Motor neuron (in vitro differentiated cells): ENCODE measurements at regions of chr22 and their contacts with region 1.

Region 1: DNA sequence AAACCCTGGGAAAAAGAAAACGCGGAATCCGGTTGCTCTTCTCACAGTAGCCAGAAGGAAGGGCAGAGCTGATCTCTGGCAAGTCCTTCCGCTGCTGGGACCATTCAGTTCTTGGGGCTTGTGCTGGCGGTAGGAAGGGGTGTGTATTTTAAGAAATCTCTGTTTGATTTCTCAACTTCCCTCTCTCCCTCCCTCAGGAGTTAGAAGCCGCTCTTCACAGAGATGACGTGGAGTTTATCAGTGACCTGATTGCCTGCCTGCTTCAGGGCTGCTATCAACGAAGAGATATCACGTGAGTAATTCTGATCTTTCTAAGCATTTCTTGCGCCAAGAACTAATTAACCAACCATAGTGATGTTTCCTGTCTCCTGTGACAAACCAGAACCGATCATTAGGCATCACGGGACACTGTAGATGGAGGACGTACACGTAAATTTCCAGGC is 85.9 kb upstream of the SLC25A18 start:
- ATAC-seq: peak in 5 of 8 experiments; percentile 26 to 55 (median 34)
- H3K4me3 ChIP-seq: peak overlapping the region in 1 of 5 donors; percentile 3
- H3K27ac ChIP-seq: peak overlapping the region in 1 of 2 donors; percentile 42
- H3K4me1 ChIP-seq: peaks cover 38 to 42% of the 10 kb centered on the region in 2 donors

Region 2: GRCh38 chr22:17084554-17085276 is 392.7 kb before region 1 on chr22 and contains the start of gene IL17RA:
- in situ Hi-C with region 1: loop called in 1 of 9 experiments (anchors 25 kb)
- ATAC-seq: peak; percentile 91 to 98 (median 96)
- H3K4me3 ChIP-seq: peak within 1 kb of the TSS; percentile 27 to 48 (median 40)
- H3K27ac ChIP-seq: no peak within 1 kb of the TSS
- H3K4me1 ChIP-seq: no peaks in the 10 kb centered on the region
- total RNA-seq, gene IL17RA: 0.27 to 7.2 (median 2.2) TPM

Region 3: DNA sequence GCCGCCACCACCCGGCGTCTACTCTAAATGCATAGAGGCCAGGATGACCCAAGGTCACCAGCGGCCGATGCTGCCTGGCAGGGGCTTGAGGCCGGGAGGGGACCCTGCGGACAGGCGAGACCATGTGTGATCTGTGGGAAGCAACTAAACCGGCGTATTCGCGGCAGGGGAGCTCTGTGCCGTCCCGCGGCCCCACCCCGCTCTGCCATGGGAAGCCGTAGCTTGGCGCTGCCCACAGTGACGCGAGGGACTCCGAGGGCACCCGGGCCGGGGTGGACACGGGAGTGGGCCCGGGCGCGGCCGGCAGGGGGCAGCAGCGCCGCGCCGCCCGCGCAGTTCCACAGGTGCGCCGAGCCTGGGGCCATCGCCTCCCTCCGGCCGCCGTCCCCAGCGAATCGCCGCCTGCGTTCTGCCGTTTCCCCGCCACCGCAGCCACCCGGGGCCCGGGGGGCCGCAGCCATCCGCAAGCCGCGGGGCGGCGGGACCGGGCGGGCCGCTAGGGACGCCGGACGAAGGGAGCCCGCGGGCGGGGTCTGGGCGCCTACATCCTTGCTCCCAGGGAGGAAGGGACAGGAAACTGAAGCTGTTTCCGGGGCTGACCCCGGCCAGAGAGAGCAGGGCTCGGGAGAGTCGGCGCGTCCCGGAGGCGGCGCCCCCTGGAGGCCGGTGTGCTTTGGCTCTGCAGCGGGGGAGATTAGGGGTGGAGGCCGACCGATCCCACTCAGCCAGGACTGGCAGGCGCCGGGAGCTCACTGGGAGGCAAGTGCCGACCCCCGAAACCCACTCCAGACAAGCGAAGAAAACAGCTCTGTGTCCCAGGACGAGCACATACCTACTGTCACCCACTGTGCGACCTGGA is 305.9 kb before region 1 on chr22:
- in situ Hi-C with region 1: loop called in 5 of 9 experiments (anchors 25 kb)
- ATAC-seq: peak; percentile 95 to 98 (median 96)
- H3K4me3 ChIP-seq: peak overlapping the region; percentile 44 to 90 (median 70)
- H3K27ac ChIP-seq: peak overlapping the region; percentile 77 to 84
- H3K4me1 ChIP-seq: peaks cover 9 to 10% of the 10 kb centered on the region in 2 donors

Region 4: DNA sequence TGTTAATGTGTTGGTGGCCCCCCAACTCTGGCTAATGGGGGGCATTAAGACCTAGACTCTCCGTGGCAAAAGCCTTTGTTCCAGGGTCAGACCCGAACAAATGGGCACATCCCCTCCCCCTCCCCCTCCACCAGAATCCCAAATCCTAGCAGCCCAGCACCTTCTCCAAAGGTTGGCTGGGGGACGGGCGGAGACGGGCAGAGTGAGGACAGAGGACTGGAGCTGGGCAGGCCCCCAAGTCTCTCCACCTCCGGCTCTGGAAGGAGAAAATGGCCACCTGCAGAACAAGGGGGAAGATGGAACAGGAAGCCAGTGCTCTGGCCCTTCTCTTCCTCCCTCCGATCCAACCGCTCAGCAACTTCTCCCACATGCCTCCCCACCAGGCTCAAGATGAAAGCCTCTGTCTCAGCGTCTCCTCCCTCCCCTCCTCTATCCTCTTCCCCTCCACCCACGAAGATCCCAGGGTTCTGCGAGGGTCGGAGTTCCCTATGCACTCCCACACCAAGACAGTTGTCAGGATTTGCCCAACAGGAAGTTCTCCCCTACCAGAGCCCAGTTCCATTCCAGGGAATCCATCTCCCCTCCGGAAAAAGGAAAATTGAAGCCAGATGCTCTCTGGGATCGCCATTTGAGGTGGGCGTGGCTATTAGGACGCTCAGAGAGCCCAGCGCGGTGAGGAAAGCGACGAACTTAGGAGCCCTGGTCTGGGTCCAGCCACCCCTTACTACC is 278.2 kb before region 1 on chr22:
- in situ Hi-C with region 1: loop called in 3 of 9 experiments (anchors 25 kb)
- ATAC-seq: peak; percentile 51 to 80 (median 60)
- H3K4me3 ChIP-seq: peak overlapping the region; percentile 27 to 35 (median 31)
- H3K27ac ChIP-seq: peak overlapping the region; percentile 89 to 95
- H3K4me1 ChIP-seq: peaks cover 17 to 38% of the 10 kb centered on the region in 2 donors

Region 5: GRCh38 chr22:17381237-17381914 is 96.0 kb before region 1 on chr22:
- in situ Hi-C with region 1: loop called in 1 of 9 experiments (anchors 25 kb)
- ATAC-seq: peak in 4 of 8 experiments; percentile 16 to 28 (median 20)
- H3K4me3 ChIP-seq: no peak overlapping the region
- H3K27ac ChIP-seq: peak overlapping the region; percentile 42 to 45
- H3K4me1 ChIP-seq: peaks cover 31 to 37% of the 10 kb centered on the region in 2 donors